PC-9 (cell line): ENCODE measurements at regions of chr1 and their contacts with region 1.

Region 1: DNA sequence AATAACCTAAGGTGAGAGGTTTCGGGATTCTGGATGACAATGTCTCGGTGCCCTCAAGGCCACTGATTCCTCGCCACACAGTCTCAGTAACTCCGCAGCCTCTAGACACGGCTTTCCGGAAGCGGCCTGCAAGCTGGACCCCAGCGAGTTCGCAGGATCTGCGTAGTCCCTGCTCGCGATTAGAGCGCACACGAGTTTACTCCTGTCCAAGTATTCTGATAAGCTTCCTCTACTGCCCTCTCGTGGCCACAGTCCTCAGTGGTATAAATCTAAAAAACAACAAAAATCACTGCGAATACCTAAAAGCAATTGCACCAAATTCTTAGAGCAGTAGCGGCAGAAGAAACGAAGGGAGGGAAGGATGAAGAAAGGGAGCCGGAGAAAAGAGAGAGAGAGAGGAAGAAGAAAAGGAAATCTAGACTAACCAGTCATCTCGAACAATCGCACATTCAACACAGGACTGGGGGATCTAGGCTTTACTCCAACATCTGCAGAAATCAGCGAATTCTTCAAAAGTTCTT is 1.1 kb upstream of the PLXNA2 start:
- DNase-seq: peak; percentile 74 to 76
- H3K4me3 ChIP-seq: peak overlapping the region; percentile 94
- H3K27ac ChIP-seq: no peak overlapping the region
- H3K4me1 ChIP-seq: peaks cover 28% of the 10 kb centered on the region
- H3K27me3 ChIP-seq: peaks cover 4% of the 10 kb centered on the region; the same call in 1 of the 2 replicates
- CTCF ChIP-seq: peak; percentile 86

Region 2: DNA sequence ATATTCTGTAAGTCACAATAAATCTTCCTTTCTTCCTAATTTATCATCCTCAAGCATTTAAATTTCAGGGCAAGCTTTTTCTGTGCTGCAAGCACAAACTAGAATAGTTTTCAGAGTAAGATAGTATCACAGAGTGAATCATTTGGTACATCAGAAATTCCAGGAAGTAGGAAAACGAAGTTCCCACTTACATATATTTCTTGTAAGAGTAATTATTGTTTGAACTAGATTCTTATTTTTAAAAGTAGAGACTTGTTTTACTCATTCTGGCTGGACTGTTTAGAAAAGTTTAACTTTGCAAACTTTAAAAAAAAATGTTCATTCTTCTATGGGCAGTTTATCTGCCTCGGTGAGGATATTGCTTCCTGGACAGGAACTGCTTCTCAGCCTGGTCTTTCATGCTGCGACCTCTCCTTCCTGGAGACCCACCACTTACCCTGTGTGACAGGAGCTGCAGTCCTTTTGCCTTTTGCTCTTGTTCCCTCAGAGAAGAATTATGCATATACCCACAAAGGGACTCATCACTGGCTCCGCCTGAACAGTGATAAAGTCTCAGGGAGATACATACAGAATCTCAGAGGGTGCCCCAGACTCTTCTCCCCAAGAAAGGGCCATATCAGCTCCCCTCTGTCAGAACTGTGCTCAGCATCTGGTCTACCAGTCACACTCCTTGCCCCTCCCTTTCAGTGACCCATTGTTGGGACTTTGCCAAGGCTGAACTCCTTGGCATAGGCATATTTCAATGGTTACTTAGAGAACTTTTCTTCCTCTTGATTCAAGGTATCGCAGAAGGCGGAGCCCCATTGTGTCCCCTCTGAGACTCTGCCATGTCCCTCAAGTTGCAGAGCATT is 1026.5 kb before region 1 on chr1:
- CTCF ChIA-PET with region 1: no interaction called
- POLR2A ChIA-PET with region 1: no interaction called
- intact Hi-C with region 1: no loop called
- DNase-seq: peak in 1 of 2 experiments; percentile 37
- H3K4me3 ChIP-seq: no peak overlapping the region
- H3K27ac ChIP-seq: no peak overlapping the region
- H3K4me1 ChIP-seq: peaks cover 31% of the 10 kb centered on the region
- H3K27me3 ChIP-seq: no peaks in the 10 kb centered on the region
- CTCF ChIP-seq: no peak

Region 3: GRCh38 chr1:207885129-207886032 is 359.9 kb before region 1 on chr1:
- CTCF ChIA-PET with region 1: interaction called, 6 read pairs
- POLR2A ChIA-PET with region 1: no interaction called
- intact Hi-C with region 1: loop called (anchors 5 kb)
- DNase-seq: peak; percentile 50 to 53
- H3K4me3 ChIP-seq: no peak overlapping the region
- H3K27ac ChIP-seq: no peak overlapping the region
- H3K4me1 ChIP-seq: no peaks in the 10 kb centered on the region
- H3K27me3 ChIP-seq: peaks cover 6% of the 10 kb centered on the region
- CTCF ChIP-seq: peak; percentile 91

Region 4: DNA sequence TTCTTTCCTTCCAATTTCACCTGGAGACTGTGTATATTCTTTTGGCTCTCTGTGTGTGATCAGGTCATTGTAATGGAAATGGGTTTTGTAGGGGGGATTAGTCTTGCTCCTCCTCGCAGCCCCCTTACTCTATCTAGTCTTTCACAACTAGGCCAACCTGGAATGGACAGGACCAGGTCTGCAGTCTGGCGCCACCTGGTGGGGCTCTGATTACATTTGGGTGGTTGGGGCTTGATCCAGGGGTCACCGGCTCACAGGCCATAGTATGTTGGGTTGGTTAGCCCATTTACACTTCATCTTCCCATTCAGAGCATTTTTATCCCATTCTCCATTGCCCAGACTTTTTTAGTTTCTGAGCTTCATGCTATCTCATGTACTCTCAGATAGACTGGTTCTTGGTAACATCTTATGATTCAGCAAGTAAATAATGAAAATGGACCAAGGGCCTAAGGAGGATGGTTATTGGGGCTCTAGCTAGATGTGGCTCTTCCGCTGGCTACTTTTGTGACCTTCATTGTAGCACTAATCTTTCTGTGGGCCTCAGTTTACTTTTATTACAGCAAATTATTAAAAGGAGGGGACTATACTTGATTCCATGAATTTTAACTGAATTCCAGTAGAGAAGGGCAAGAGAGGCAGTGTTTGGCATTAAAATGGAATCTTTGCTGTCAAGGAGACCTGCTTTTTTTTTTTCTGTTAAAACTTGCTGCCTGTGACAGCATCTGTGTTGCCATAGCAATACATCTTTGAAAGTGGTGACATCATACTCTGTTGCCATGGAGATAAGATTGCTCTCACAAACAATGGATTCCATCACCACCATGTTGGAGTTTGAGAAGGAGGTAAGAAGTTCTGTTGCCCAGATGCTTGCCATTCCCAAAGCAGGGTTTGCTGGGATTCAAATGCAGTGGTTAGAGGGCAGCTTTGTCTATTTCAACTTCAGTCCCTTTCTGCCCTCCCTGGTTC is 151.2 kb before region 1 on chr1:
- CTCF ChIA-PET with region 1: interaction called, 4 read pairs
- POLR2A ChIA-PET with region 1: no interaction called
- intact Hi-C with region 1: loop called (anchors 2 kb)
- DNase-seq: peak; percentile 51 to 53
- H3K4me3 ChIP-seq: no peak overlapping the region
- H3K27ac ChIP-seq: no peak overlapping the region
- H3K4me1 ChIP-seq: no peaks in the 10 kb centered on the region
- H3K27me3 ChIP-seq: no peaks in the 10 kb centered on the region
- CTCF ChIP-seq: peak; percentile 81

Region 5: DNA sequence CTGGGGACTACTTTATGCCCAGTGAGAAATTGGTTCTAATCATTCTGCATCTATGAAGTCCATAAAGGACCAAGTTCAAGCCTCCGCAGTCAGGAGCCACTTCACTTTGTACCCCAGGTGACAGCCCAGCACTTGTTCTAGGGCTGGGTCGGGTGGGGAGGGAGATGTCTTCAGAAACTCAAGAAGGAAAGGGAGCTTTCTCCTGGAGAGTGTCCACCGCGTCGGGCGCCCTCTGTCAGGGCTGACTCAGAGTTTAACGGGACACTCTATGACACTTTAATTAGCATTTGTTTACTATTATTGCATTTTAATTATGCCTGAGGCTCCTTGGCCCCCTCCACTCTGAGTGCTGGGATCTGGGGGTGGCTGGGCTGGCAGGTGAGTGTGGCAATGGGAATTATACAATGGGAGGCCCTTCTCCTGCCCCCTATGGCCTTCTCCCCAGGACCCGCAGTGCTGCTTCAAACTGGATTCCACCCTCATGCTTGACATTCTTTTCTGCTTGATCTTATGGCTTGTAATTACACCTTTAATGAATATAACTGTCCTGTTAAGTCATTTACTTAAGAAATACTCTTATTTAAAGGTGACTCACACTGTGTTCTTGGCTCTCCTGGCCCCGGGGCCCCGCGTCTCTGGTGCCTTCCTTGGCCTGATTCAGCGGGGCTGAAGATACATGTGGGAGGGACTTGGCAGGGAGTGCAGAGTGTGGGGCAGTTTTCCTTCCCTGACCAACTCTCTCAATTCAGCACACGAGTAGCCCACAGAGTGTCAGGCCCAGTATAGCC is 137.6 kb before region 1 on chr1:
- CTCF ChIA-PET with region 1: no interaction called
- POLR2A ChIA-PET with region 1: no interaction called
- intact Hi-C with region 1: loop called (anchors 1 kb)
- DNase-seq: peak; percentile 81 to 96
- H3K4me3 ChIP-seq: no peak overlapping the region
- H3K27ac ChIP-seq: peak overlapping the region; percentile 73
- H3K4me1 ChIP-seq: peaks cover 66% of the 10 kb centered on the region
- H3K27me3 ChIP-seq: no peaks in the 10 kb centered on the region
- CTCF ChIP-seq: no peak; the same call in 1 of the 2 replicates

Region 6: DNA sequence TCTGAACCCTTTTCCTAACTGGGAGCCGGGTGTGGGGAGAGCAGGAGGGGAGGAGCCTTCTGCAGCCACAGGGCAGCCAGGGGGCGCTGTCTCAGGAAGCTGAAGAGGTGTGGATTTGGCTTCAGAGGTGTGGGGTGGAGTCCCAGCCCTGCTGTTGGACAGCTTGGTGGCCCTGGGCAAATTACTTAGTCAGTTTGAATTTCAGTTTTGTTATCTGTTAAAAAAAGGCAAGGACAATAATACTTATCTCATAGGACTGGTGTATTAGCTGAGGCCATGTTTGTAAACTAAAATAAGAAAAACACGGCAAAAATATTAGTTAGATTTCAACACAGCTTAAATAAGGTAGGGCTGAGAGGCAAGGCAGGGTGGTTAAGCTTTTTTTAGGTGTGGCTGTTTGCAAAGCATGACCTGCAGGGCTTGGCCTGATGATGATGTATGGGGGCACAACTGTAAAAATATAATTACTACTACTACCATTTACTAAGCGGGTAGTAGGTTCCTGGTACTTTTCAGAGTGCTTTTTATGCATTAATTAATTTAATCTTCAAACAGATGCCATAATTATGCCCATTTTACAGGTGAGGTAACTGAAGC is 112.9 kb before region 1 on chr1:
- CTCF ChIA-PET with region 1: interaction called, 3 read pairs
- POLR2A ChIA-PET with region 1: interaction called, 4 read pairs
- intact Hi-C with region 1: loop called (anchors 1 kb)
- DNase-seq: peak; percentile 75 to 90
- H3K4me3 ChIP-seq: peak overlapping the region; percentile 9; the same call in 1 of the 2 replicates
- H3K27ac ChIP-seq: peak overlapping the region; percentile 49
- H3K4me1 ChIP-seq: peaks cover 42% of the 10 kb centered on the region
- H3K27me3 ChIP-seq: no peaks in the 10 kb centered on the region
- CTCF ChIP-seq: peak; percentile 98

Region 7: DNA sequence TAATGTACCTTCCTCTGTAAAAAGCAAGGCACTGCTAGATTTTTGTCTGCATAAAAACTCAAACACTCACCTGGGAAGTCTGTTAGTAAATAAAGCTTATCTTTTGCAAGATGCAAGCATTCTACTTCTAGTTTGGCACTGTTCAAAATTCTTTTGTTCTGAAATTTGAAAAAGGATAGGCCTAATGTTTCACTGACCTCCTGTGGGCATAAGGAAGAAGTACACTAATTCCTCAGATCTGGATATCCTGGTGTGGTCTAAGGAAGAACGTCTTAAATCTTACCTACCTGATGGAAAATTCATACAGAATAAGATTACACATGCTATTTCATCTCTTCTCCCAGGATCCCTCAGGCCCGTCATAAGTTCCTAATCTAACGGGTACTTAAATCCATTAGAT is 1244.8 kb after region 1 on chr1:
- CTCF ChIA-PET with region 1: no interaction called
- POLR2A ChIA-PET with region 1: no interaction called
- intact Hi-C with region 1: loop called (anchors 1 kb)
- DNase-seq: peak in 1 of 2 experiments; percentile 59
- H3K4me3 ChIP-seq: no peak overlapping the region
- H3K27ac ChIP-seq: no peak overlapping the region
- H3K4me1 ChIP-seq: no peaks in the 10 kb centered on the region
- H3K27me3 ChIP-seq: no peaks in the 10 kb centered on the region
- CTCF ChIP-seq: peak; percentile 80

Region 8: DNA sequence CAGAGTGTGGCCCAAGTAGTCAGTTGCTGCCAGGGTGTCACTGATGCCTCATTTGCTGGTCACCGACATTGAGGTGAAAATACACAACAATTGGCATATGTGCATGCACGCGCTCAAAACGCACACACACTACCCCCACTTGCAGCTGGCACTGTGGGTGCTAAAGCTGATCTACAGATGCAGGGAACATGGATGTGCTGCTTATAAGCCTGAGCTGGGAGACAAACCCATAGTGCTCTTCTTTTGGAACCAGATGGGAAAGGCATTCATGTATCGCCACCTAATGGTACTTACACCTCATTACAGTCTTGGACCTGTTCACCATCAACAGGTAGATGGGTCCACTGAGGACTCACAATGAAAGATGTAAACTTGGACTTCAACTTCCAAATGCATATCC is 1268.0 kb after region 1 on chr1:
- CTCF ChIA-PET with region 1: no interaction called
- POLR2A ChIA-PET with region 1: no interaction called
- intact Hi-C with region 1: loop called (anchors 1 kb)
- DNase-seq: peak; percentile 17 to 44
- H3K4me3 ChIP-seq: no peak overlapping the region
- H3K27ac ChIP-seq: no peak overlapping the region
- H3K4me1 ChIP-seq: no peaks in the 10 kb centered on the region
- H3K27me3 ChIP-seq: peaks cover 14% of the 10 kb centered on the region
- CTCF ChIP-seq: peak; percentile 76